Heart left ventricle (tissue), 16 donors: ENCODE measurements at regions of chr2 and their contacts with region 1.

Region 1: DNA sequence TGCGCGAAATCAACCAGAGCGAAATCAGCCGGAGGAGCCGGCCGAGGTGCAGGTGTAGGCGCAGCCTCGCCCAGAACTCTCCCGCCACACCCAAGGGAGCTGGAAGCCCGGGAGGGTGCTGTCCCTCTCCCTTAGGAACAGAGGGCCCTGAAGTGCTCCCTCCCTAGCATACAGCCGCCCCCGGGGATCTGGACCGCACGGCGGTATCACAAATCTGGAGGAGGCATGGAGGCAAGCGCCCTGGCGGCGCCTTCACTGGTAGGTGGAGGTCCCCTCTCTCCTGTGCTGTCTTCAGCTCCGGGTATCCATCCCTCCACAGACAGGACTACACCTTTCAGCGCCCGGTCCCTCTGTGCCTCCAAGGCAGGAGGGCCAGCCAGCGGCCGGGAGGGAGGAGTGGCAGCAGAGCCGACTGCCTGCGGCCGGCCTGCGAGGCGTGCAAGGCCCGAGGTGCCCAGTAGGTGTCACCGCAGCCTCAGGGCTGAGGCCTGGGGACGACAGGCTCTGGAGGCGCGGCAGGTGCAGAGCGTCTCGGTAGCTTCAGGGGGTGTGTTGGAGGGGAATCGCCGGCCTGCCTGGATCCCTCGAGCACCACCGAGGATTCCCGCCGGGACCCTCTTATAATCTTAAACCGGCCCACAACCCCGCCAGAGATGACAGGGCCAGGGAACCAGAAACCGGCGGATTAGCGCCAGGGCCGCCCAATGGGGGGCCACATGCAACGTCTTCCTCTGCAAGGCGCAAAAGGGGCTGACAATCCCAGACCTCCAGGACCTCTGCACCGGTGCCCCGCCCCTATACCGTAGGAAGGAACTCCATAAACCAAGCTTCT is 2.8 kb downstream of the IHH start:
- DNase-seq: peak; percentile 66 to 89 (median 76)
- ATAC-seq: peak; percentile 92 to 97 (median 95)
- H3K4me3 ChIP-seq: peak overlapping the region in 6 of 12 donors; percentile 6 to 20 (median 14)
- H3K27ac ChIP-seq: no peak overlapping the region
- H3K4me1 ChIP-seq: peaks cover 12 to 42% (median 33%) of the 10 kb centered on the region in 12 donors
- H3K27me3 ChIP-seq: peaks cover 59 to 97% (median 72%) of the 10 kb centered on the region in 9 donors
- CTCF ChIP-seq: peak; percentile 87 to 97 (median 94)
- POLR2A ChIP-seq: no peak

Region 2: GRCh38 chr2:218995972-218996711 is 61.8 kb before region 1 on chr2:
- intact Hi-C with region 1: no loop called
- DNase-seq: peak; percentile 82 to 89 (median 87)
- ATAC-seq: peak; percentile 72 to 95 (median 90)
- H3K4me3 ChIP-seq: peak overlapping the region in 10 of 12 donors; percentile 24 to 48 (median 35)
- H3K27ac ChIP-seq: no peak overlapping the region
- H3K4me1 ChIP-seq: peaks cover 0 to 29% (median 18%) of the 10 kb centered on the region in 12 donors
- H3K27me3 ChIP-seq: peaks cover 49 to 93% (median 84%) of the 10 kb centered on the region in 9 donors
- CTCF ChIP-seq: peak; percentile 79 to 95 (median 88)
- POLR2A ChIP-seq: no peak

Region 3: GRCh38 chr2:219119422-219120043 is 61.6 kb after region 1 on chr2:
- intact Hi-C with region 1: loop called (anchors 1 to 5 kb)
- DNase-seq: peak; percentile 57 to 72 (median 62)
- ATAC-seq: peak in 3 of 4 donors; percentile 67 to 79 (median 71)
- H3K4me3 ChIP-seq: no peak overlapping the region
- H3K27ac ChIP-seq: no peak overlapping the region
- H3K4me1 ChIP-seq: peaks cover 0 to 21% (median 9%) of the 10 kb centered on the region in 12 donors
- H3K27me3 ChIP-seq: no peaks in the 10 kb centered on the region
- CTCF ChIP-seq: peak; percentile 51 to 84 (median 72)
- POLR2A ChIP-seq: no peak

Region 4: DNA sequence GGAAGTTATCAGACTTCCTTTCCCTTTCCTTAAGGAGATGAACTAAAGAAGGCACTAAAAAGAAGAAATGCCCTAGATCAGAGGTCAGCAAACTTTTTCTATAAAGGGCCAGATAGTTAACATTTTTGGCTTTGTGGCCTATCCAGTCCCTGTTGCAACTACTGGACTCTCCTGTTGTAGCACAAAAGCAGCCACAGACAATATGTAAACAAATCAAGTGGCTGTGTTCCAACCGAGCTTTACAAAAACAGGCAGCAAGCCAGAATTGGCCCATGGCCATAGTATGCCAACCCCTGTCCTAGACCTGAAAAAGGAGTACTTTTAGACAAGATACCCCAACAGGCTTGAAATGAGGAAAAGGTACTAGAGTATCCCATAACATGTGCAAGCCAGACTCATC is 91.7 kb after region 1 on chr2:
- intact Hi-C with region 1: loop called in 6 of 10 experiments (anchors 2 to 10 kb)
- DNase-seq: no peak
- ATAC-seq: no peak
- H3K4me3 ChIP-seq: no peak overlapping the region
- H3K27ac ChIP-seq: no peak overlapping the region
- H3K4me1 ChIP-seq: peaks cover 0 to 9% (median 0%) of the 10 kb centered on the region in 12 donors
- H3K27me3 ChIP-seq: no peaks in the 10 kb centered on the region
- CTCF ChIP-seq: no peak
- POLR2A ChIP-seq: no peak

Region 5: GRCh38 chr2:219155054-219155644 is 97.2 kb after region 1 on chr2:
- intact Hi-C with region 1: loop called (anchors 1 to 10 kb)
- DNase-seq: peak in 2 of 5 donors; percentile 33
- ATAC-seq: peak in 3 of 4 donors; percentile 51 to 64 (median 61)
- H3K4me3 ChIP-seq: no peak overlapping the region
- H3K27ac ChIP-seq: no peak overlapping the region
- H3K4me1 ChIP-seq: peaks cover 0 to 9% (median 6%) of the 10 kb centered on the region in 12 donors
- H3K27me3 ChIP-seq: no peaks in the 10 kb centered on the region
- CTCF ChIP-seq: peak; percentile 49 to 76 (median 64)
- POLR2A ChIP-seq: no peak

Region 6: DNA sequence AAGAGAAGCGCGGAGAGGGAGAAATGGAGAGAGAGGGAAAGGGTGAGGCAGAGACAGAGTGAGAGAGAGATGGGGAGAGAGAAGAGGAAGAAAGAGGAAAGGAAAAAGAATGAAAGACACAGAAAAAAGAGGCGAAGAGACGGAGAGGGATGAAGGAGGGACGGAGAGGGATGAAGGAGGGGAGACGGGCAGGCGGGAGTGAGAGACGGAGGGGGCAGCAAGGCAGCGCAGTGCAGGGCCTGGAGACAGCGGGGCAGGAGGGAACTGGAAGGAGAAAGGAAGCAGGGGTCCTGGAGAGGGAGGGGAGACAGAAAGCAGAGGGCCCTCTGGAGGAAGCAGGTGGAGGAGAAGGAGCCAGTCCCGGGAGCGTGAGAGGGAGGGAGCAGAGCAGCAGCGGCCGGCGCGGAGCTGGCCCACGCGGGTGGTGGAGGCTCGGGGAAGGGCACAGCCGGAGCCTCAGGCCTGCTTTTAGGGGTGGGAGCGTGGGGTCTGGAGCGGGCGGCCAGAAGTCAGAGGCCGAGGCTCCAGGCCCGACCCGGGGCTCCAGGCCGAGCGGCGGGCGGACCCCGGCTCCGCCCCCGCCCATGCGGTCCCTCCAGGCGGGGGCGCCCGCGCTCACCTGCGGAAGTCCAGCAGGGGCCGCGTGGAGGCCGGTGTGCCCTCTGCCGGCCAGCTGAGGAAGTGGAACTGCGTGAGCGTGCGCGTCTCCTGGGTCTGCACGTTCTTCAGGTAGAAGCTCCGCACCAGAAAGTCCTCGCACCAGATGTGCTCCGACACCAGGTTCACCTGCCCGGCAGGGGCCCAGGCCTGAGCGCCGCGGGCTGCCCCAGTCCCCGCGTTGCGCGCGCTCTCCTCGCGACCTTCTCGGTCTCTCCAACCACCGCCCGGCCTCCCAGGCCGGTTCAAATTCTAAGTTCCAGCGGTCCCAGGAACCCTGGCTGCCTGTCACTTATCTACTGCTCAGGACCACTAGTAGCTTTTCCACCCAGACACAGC is 236.7 kb after region 1 on chr2:
- intact Hi-C with region 1: loop called in 3 of 10 experiments (anchors 5 to 10 kb)
- DNase-seq: peak; percentile 83 to 93 (median 89)
- ATAC-seq: peak; percentile 48 to 92 (median 89)
- H3K4me3 ChIP-seq: peak overlapping the region; percentile 22 to 77 (median 64)
- H3K27ac ChIP-seq: peak overlapping the region; percentile 11 to 93 (median 78)
- H3K4me1 ChIP-seq: peaks cover 0 to 24% (median 11%) of the 10 kb centered on the region in 12 donors
- H3K27me3 ChIP-seq: peaks cover 0 to 8% (median 0%) of the 10 kb centered on the region in 9 donors
- CTCF ChIP-seq: peak in 11 of 12 donors; percentile 99 to 100 (median 100)
- POLR2A ChIP-seq: peak in 1 of 2 donors; percentile 66

Region 7: GRCh38 chr2:219300022-219300421 is 242.1 kb after region 1 on chr2:
- intact Hi-C with region 1: loop called in 5 of 10 experiments (anchors 5 to 10 kb)
- DNase-seq: no peak
- ATAC-seq: no peak
- H3K4me3 ChIP-seq: no peak overlapping the region
- H3K27ac ChIP-seq: no peak overlapping the region
- H3K4me1 ChIP-seq: peaks cover 0 to 11% (median 3%) of the 10 kb centered on the region in 12 donors
- H3K27me3 ChIP-seq: peaks cover 0 to 37% (median 8%) of the 10 kb centered on the region in 9 donors
- CTCF ChIP-seq: no peak
- POLR2A ChIP-seq: no peak

Region 8: DNA sequence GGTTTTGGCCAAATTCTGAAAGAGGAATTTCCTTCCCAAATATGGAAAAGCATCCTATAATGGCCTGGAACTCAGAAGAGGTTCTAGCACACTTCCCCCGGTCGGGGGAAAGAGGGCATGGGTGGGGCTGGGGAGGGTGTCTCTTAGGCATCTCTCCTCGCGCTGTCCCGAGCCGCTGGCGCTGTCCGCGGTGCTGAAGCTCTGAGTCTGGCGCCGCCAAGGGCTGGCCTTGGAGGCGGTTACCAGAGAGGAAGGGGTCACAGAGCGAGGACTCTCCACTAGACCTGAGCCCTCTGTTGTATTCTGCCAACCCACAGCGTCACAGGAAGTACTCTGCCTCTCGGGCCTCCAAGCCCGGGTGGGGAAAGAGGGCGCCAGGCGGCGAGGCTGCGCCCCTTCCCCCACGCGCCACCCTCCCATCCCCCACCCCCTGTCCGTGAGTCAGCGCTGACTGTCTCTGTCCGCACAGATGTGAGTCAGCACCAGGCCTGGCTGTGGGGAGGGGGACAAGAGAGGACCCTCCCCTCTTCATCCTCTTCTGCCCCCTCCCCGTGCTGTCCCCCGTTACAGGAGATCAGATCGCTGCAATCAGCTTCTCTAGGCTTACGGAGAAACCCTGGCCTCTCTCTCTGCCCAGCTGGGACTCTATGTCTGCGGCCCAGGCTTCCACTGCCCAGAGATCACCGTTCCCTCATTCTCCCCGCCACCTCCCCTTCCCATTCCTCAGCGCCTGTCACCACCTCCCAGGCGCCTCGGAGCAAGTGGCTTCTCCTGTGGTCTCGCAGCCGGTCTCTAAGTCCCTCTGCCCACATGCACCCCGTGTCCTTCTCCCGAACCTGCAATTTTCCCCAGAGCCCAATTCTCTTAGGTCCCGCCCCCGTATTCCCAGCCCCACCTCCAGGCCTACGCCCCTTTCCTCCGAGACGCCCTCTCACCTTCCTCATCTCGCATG is 250.5 kb after region 1 on chr2:
- intact Hi-C with region 1: loop called in 2 of 10 experiments (anchors 5 to 10 kb)
- DNase-seq: peak in 4 of 5 donors; percentile 42 to 84 (median 70)
- ATAC-seq: peak; percentile 51 to 82 (median 80)
- H3K4me3 ChIP-seq: no peak overlapping the region
- H3K27ac ChIP-seq: no peak overlapping the region
- H3K4me1 ChIP-seq: peaks cover 0 to 14% (median 0%) of the 10 kb centered on the region in 12 donors
- H3K27me3 ChIP-seq: peaks cover 11 to 61% (median 27%) of the 10 kb centered on the region in 9 donors
- CTCF ChIP-seq: no peak
- POLR2A ChIP-seq: no peak